Right ventricle myocardium superior (tissue), 1 donor: ENCODE measurements at regions of chr1 and their contacts with region 1.

Region 1: GRCh38 chr1:218171285-218171893 is 113.7 kb upstream of the RRP15 start:
- DNase-seq: no peak
- ATAC-seq: peak; percentile 61

Region 2: DNA sequence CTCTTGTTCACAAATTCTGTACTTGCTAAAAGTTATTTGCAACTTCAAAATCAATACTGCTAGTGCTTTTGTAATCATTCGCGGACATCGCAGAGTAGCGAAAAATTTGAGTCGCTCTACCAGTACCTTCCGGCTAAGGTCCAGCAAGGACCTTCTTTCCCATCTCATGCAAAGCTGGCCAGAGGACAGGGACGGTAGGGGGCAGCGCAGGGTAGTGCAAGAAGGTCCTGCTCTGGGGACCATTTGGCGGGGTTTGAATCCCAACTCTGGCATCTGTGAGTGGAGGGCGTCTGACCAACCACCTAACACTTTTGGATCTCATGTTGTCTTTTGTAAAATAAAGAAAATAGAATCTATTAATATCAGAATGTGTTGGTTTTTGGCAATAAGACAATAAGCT is 282.0 kb before region 1 on chr1:
- intact Hi-C with region 1: loop called (anchors 10 kb)
- DNase-seq: peak; percentile 44
- ATAC-seq: no peak

Region 3: GRCh38 chr1:218250492-218250891 is 79.1 kb after region 1 on chr1:
- intact Hi-C with region 1: no loop called
- DNase-seq: no peak
- ATAC-seq: no peak

Region 4: DNA sequence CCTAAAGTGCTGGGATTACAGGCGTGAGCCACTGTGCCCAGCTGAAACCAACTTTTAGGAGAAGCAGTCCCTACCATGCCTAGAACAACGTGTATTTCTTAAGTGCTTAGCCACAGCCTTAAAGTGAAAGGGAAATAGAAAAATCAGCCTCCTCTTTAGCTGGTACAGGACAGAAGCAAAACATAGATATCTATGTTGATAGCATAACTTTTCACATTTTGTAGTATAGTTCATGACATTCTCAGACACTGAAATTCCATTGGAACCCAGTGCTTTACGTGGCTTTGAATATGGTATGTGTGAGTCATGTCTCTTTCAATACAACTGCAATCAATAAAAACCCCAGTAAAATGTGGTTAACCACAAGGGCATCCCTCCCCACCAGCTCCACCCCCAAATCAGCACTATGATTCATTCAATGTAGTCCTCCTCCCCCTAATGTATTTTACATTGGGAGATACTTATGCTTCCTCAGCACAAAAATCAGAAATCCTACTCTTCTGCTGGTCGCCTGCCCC is 205.8 kb after region 1 on chr1:
- intact Hi-C with region 1: no loop called
- DNase-seq: no peak
- ATAC-seq: no peak